H1 (cell line): ENCODE measurements at regions of chr3 and their contacts with region 1.

Region 1: GRCh38 chr3:159988617-159989271 is at the start of gene IL12A:
- DNase-seq: peak; percentile 57 to 92
- H3K4me3 ChIP-seq: peak within 1 kb of the TSS; percentile 46 to 73 (median 56)
- H3K27ac ChIP-seq: no peak within 1 kb of the TSS
- H3K4me1 ChIP-seq: peaks cover 0 to 5% (median under 1%) of the 10 kb centered on the region in 4 experiments
- H3K27me3 ChIP-seq: peaks cover 0 to 3% (median 2%) of the 10 kb centered on the region in 4 experiments; a peak in 3 of 7 replicates
- CTCF ChIP-seq: peak; percentile 81 to 98 (median 88)
- EP300 ChIP-seq: no peak
- POLR2A ChIP-seq: no peak
- RAD21 ChIP-seq: peak; percentile 59 to 69
- total RNA-seq, gene IL12A: 0.41 and 0.82 TPM in 2 replicates

Region 2: DNA sequence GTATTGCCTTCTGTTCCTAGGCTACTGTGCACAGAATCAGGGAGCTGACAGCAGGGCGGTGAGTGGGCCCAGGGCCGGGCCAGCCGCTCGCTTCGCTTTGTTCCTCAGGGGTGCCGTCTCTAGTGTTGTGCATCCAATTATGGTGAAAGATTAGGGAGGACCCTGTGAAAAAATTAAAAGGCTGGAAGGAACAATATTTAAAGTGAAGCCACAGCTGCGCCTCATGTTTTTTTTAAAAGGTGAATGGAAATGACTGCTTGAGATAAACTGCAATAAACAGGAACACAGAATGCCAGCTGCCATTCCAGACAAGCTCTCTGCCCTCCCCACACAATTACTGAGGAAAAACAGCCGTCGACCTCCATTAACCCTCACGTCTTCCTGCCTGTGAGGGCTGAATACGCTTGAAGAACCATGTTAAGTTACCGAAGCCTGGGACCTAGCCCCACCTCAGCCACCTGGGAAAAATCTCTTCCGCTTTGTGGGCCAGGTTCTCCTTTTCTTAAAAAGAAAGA is 132.1 kb before region 1 on chr3:
- CTCF ChIA-PET with region 1: no interaction called
- POLR2A ChIA-PET with region 1: no interaction called
- DNase-seq: no peak
- H3K4me3 ChIP-seq: no peak overlapping the region
- H3K27ac ChIP-seq: no peak overlapping the region
- H3K4me1 ChIP-seq: peaks cover 4 to 11% (median 7%) of the 10 kb centered on the region in 4 experiments; a peak in 6 of 7 replicates
- H3K27me3 ChIP-seq: no peaks in the 10 kb centered on the region
- CTCF ChIP-seq: no peak
- EP300 ChIP-seq: no peak
- POLR2A ChIP-seq: no peak
- RAD21 ChIP-seq: no peak

Region 3: GRCh38 chr3:159872374-159873109 is 116.2 kb before region 1 on chr3:
- CTCF ChIA-PET with region 1: interaction called, 14 read pairs
- POLR2A ChIA-PET with region 1: no interaction called
- DNase-seq: no peak
- H3K4me3 ChIP-seq: no peak overlapping the region
- H3K27ac ChIP-seq: no peak overlapping the region
- H3K4me1 ChIP-seq: peaks cover 0 to 7% (median 3%) of the 10 kb centered on the region in 4 experiments; a peak in 3 of 7 replicates
- H3K27me3 ChIP-seq: peaks cover 0 to 1% (median 0%) of the 10 kb centered on the region in 4 experiments; a peak in 1 of 7 replicates
- CTCF ChIP-seq: no peak
- EP300 ChIP-seq: no peak
- POLR2A ChIP-seq: no peak
- RAD21 ChIP-seq: no peak

Region 4: DNA sequence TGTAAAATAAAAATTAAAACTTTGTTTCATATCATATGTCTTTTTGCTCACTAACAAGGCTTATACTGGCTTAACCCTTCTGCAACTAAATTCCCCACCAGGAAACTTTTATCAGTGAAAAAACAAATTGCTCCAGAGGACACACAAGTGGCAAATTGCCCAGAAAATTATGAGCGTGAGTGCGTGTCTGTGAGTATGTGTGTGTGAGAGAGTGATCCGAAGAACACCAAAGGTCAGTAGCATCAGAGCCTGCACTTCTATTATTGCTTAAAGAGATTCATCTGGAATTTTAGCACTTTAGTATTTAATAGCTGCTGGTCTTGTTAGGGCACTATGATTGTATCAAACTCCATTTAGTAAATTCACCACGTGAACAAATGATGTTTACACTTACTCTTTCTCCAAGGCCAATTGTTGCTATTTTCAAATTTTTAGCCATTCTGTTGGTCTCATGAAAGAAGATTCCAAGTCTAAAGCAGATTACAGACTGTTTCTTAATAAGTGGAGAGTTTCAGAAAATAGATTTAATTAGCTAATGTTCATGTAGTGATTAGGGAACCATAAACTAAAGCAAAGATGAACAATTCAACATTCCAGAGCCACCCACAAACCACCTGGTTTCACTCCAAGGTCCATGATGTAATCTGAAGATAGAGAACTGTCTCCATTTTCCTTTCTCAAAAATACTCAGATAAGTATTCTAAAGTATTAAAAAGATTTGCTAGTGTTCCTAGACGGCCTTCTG is 91.2 kb before region 1 on chr3:
- CTCF ChIA-PET with region 1: interaction called, 21 read pairs
- POLR2A ChIA-PET with region 1: no interaction called
- DNase-seq: no peak
- H3K4me3 ChIP-seq: no peak overlapping the region
- H3K27ac ChIP-seq: no peak overlapping the region
- H3K4me1 ChIP-seq: no peaks in the 10 kb centered on the region; a peak in 1 of 7 replicates
- H3K27me3 ChIP-seq: no peaks in the 10 kb centered on the region
- CTCF ChIP-seq: no peak
- EP300 ChIP-seq: no peak
- POLR2A ChIP-seq: no peak
- RAD21 ChIP-seq: no peak

Region 5: DNA sequence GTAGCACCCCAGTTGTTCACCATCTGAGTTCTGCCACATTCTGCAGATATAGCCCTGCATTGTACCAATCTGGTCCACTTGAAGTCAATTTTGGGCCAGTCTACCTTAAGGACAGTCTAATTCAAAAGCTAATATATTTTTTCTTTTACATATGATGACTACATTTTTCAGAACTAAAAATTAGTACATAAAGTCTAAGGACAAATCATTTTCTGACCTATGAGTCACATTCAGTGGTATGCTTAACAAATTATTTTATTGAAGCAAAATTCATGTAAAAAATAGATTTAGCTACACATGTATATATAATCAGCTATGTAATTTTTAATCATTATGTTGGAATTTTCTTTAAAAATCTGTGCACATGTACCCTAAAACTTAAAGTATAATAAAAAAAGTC is 52.2 kb before region 1 on chr3:
- CTCF ChIA-PET with region 1: interaction called, 11 read pairs
- POLR2A ChIA-PET with region 1: no interaction called
- DNase-seq: no peak
- H3K4me3 ChIP-seq: no peak overlapping the region
- H3K27ac ChIP-seq: no peak overlapping the region
- H3K4me1 ChIP-seq: no peaks in the 10 kb centered on the region
- H3K27me3 ChIP-seq: no peaks in the 10 kb centered on the region
- CTCF ChIP-seq: no peak
- EP300 ChIP-seq: no peak
- POLR2A ChIP-seq: no peak
- RAD21 ChIP-seq: no peak

Region 6: DNA sequence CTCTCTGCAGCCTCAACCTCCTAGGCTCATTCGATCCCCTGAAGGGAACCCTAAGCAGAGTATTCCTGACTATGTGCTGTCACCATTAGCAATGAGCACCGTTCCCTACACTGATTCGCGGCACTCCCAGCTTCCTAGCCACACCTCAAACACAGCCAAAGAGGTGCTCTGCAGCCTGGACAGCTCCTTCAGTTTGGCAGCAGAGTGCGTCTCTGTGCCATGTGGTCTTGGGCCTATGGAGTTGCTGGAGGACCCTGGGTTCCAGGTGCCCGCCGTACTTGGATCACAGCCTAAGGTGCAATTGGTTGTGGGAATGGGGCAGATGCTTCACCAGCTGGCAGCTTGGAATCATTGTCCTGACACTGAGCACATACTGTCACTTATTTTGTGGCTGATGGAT is 17.4 kb before region 1 on chr3:
- CTCF ChIA-PET with region 1: interaction called, 18 read pairs
- POLR2A ChIA-PET with region 1: no interaction called
- DNase-seq: no peak
- H3K4me3 ChIP-seq: no peak overlapping the region
- H3K27ac ChIP-seq: no peak overlapping the region
- H3K4me1 ChIP-seq: no peaks in the 10 kb centered on the region
- H3K27me3 ChIP-seq: no peaks in the 10 kb centered on the region
- CTCF ChIP-seq: no peak
- EP300 ChIP-seq: no peak
- POLR2A ChIP-seq: no peak
- RAD21 ChIP-seq: no peak

Region 7: DNA sequence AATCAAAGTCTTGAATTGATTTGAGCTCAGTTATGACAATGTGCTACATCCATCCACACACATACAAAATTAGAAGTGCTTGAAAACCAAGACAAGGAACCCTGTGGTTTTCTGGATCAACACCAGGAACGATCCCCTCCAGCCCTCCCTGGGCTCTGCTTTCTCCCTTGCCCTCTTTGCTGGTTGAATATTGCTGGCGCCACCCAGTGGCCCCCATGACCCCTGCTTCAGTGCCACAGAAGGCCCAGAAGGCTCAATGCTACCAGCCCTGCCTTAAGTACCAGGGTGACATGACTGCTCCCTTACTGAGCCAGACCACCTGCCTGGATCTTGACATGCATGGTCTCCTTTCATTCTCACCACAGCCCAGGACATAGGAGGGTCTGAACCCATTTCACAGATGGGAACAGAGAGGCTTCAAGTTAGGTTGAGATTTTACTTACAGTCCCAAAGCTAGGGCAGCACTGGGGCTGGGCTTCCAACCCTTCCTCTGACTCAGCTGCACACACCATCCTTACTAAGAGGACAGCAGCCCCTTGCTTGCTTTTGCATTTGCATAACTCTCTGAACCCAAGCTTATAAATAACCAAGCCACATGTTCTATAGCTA is 14.9 kb after region 1 on chr3:
- CTCF ChIA-PET with region 1: interaction called, 277 read pairs
- POLR2A ChIA-PET with region 1: no interaction called
- DNase-seq: peak in 1 of 2 experiments; percentile 76
- H3K4me3 ChIP-seq: no peak overlapping the region
- H3K27ac ChIP-seq: no peak overlapping the region
- H3K4me1 ChIP-seq: peaks cover 0 to 6% (median 3%) of the 10 kb centered on the region in 4 experiments; a peak in 3 of 7 replicates
- H3K27me3 ChIP-seq: no peaks in the 10 kb centered on the region
- CTCF ChIP-seq: peak; percentile 76 to 78 (median 77)
- EP300 ChIP-seq: no peak
- POLR2A ChIP-seq: no peak
- RAD21 ChIP-seq: peak; percentile 65 to 76